ENCODE measurements at regions of chr7 and their contacts with region 1.

Region 1: DNA sequence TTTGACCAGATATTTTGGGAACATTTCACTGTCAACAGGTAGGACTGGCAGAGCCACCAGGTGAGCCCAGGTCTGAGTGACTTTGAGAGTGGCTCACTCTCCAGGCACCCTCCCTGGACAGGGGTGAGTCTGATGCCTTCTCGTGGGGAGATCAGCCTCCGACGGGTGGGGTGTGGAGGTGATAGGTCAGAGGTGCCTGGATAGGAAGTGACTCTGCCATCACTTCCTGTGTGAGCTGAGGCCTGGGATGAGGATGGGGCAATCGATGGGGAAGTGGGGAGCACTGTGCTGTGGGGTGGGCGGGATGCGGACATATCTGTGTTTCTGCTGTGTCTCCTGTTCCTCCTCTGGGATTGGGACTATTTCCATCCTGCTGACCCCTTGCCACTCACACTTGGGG is 34.6 kb downstream of the IFT22 start:
- DNase-seq: no peak
- ATAC-seq: no peak
- H3K4me3 Mint-ChIP-seq: no peak overlapping the region
- H3K27ac Mint-ChIP-seq: peak overlapping the region; percentile 68
- H3K4me1 Mint-ChIP-seq: peaks cover 43% of the 10 kb centered on the region
- H3K27me3 Mint-ChIP-seq: no peaks in the 10 kb centered on the region; the same call in 1 of the 2 replicates
- CTCF ChIP-seq: no peak

Region 2: DNA sequence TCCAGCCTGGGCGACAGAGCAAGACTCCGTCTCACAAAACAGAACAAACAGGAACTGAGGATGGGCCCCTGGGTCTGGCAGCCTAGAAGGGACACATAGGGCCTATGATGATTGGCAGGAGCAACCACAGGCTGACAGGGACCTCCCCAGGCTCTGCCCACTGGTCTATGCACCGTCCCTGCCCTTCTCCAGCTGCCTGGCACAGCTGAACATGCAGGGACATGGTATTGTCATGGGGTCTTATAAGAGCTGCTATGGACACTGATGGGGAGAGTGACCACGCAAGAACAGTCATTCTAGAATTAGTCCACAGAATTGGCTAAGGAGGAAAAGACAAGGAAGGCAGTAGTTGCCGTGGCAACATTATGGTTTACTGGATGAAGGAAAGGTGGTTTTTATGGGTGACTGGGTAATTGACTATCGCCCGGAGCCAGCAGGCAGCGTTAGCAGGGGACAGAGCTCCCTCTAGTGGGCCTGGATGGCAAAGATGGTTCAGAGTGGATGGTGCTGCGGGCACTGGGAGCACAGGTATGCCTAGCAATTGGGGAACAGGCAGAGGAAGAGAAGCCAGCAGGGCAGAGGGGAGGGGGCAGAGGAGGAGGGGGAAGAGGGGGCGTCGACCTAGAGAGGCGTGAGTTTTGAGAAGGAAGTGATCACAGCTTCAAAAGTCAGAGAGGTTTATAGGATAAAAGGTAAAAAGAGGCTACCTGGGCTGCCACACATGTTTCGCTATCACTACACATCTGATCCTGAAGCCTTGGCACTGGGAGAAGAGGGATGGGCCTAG is 209.5 kb before region 1 on chr7:
- CTCF ChIA-PET with region 1: interaction called, 13 read pairs
- POLR2A ChIA-PET with region 1: no interaction called
- DNase-seq: peak; percentile 96
- ATAC-seq: peak; percentile 99
- H3K4me3 Mint-ChIP-seq: no peak overlapping the region
- H3K27ac Mint-ChIP-seq: no peak overlapping the region
- H3K4me1 Mint-ChIP-seq: peaks cover 8% of the 10 kb centered on the region; the same call in 1 of the 2 replicates
- H3K27me3 Mint-ChIP-seq: no peaks in the 10 kb centered on the region
- CTCF ChIP-seq: peak; percentile 90

Region 3: DNA sequence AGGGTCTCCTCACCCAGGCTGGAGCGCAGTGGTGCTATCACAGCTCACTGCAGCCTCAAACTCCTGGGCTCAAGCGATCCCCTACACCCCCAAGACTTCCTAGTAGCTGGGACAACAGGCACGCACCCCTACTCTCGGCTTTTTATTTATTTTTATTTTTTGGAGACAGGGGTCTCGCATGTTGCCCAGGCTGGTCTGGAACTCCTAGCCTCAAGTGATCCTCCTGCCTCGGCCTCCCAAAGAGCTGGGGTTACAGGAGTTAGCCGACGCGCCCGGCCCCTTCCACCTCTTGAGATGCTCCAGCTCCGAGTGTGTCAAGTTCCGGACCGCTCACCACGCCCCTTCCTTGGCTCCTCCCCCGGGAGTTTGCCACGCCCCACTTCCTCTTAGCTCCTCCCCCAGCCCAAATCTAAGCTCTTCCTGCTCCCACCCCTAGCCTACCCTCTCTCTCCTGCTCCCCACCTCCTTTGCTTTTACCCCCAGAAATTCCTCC is 113.2 kb before region 1 on chr7:
- CTCF ChIA-PET with region 1: interaction called, 16 read pairs
- POLR2A ChIA-PET with region 1: no interaction called
- DNase-seq: peak; percentile 91
- ATAC-seq: peak; percentile 71
- H3K4me3 Mint-ChIP-seq: peak overlapping the region; percentile 74
- H3K27ac Mint-ChIP-seq: no peak overlapping the region
- H3K4me1 Mint-ChIP-seq: peaks cover 43% of the 10 kb centered on the region
- H3K27me3 Mint-ChIP-seq: peaks cover 100% of the 10 kb centered on the region
- CTCF ChIP-seq: no peak

Region 4: GRCh38 chr7:101212014-101212557 is 74.9 kb before region 1 on chr7:
- CTCF ChIA-PET with region 1: interaction called, 41 read pairs
- POLR2A ChIA-PET with region 1: no interaction called
- DNase-seq: no peak
- ATAC-seq: no peak
- H3K4me3 Mint-ChIP-seq: no peak overlapping the region
- H3K27ac Mint-ChIP-seq: no peak overlapping the region
- H3K4me1 Mint-ChIP-seq: peaks cover 9% of the 10 kb centered on the region
- H3K27me3 Mint-ChIP-seq: no peaks in the 10 kb centered on the region
- CTCF ChIP-seq: no peak

Region 5: DNA sequence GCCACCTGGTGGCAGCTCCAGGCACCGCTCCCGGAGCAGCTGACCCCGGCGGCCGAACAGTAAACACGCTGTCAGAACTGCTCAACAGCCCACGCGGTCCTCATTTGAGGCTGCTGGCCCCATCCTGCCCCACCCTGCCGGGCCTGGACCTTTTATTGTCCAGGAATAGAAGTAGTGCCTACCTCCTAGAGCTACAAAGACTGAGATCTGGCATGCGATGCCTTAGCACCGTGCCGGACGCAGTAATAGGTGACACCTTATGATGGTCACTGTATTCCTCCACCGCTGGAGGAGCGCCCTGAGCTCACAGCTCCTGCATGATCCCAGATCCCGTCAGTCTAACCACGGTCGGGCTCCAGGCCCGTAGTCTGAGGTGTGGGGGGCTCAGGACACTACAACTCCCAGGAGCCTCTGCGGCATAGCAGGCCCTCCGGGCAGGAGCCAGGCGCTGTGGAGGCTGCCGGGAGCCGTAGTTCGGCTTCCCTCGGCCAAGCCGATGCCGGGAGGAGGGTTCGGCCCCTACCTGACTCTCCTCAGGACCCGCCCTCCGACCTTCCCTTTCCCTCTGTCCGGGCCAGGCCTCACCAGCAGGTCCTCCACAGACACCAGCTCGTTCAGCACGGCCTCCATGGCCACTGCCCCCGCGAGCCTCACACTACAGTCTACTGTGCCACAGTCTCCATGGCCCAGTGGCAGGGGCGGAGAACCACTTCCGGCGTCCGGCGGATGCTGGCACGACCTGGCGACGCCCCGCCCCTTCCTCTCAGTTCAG is 42.5 kb before region 1 on chr7 and contains the start of gene FIS1:
- CTCF ChIA-PET with region 1: interaction called, 80 read pairs
- POLR2A ChIA-PET with region 1: no interaction called
- DNase-seq: peak; percentile 95
- ATAC-seq: peak; percentile 93
- H3K4me3 Mint-ChIP-seq: peak within 1 kb of the TSS; percentile 96
- H3K27ac Mint-ChIP-seq: peak within 1 kb of the TSS; percentile 98
- H3K4me1 Mint-ChIP-seq: peaks cover 21% of the 10 kb centered on the region
- H3K27me3 Mint-ChIP-seq: no peaks in the 10 kb centered on the region
- CTCF ChIP-seq: peak; percentile 47
- total RNA-seq, gene FIS1: 121 to 123 TPM (median 122 TPM) in 3 replicates

Region 6: DNA sequence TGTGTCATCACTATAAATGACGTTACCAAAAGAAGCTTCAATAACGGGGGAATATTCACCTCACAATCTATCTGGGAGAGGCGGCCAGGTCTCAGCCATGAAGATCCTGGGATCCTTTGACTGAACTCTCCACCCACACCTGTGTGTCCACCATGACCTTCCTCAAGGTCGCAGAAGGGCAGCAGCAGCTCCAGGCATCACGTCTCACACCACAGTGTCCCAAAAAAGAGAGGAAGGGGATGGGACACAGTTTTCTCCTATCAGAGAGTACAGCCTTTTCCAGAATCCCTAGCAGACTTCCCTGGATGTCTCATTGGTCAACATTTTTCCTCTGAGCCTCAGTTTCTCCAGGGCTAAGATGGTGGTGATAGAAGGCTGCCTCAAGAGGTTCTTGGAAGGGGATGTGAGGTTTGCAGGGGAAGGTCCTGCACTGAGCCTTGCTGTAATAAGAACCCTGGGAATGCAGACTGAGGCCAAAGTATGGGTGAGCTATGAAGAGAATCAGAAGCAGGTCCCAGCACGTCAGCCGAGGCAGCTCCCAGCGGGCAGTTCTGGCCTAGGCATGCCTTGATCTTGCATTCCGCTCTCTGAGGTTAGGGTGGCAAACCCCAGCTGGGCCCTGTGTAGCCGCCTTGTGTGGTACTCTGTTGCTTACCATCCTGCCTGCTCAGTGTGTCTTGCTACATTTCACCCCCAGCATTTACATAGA is 139.4 kb after region 1 on chr7:
- CTCF ChIA-PET with region 1: no interaction called
- POLR2A ChIA-PET with region 1: no interaction called
- DNase-seq: no peak
- ATAC-seq: no peak
- H3K4me3 Mint-ChIP-seq: no peak overlapping the region
- H3K27ac Mint-ChIP-seq: no peak overlapping the region
- H3K4me1 Mint-ChIP-seq: peaks cover 9% of the 10 kb centered on the region; the same call in 1 of the 2 replicates
- H3K27me3 Mint-ChIP-seq: no peaks in the 10 kb centered on the region
- CTCF ChIP-seq: no peak

Region 7: GRCh38 chr7:101436857-101437576 is 150.0 kb after region 1 on chr7:
- CTCF ChIA-PET with region 1: interaction called, 11 read pairs
- POLR2A ChIA-PET with region 1: no interaction called
- DNase-seq: peak; percentile 94
- ATAC-seq: peak; percentile 87
- H3K4me3 Mint-ChIP-seq: no peak overlapping the region
- H3K27ac Mint-ChIP-seq: peak overlapping the region; percentile 79
- H3K4me1 Mint-ChIP-seq: peaks cover 26% of the 10 kb centered on the region
- H3K27me3 Mint-ChIP-seq: no peaks in the 10 kb centered on the region
- CTCF ChIP-seq: no peak

Measured in WTC11 (cell line).